ENCODE measurements at regions of chr10 and their contacts with region 1.

Region 1: GRCh38 chr10:109883859-109884771 is 39.2 kb downstream of the XPNPEP1 start:
- DNase-seq: peak; percentile 93
- H3K4me3 ChIP-seq: no peak overlapping the region
- H3K27ac ChIP-seq: peak overlapping the region; percentile 68
- H3K4me1 ChIP-seq: peaks cover 10% of the 10 kb centered on the region
- H3K27me3 ChIP-seq: no peaks in the 10 kb centered on the region
- CTCF ChIP-seq: peak; percentile 92 to 97
- POLR2A ChIP-seq: no peak

Region 2: DNA sequence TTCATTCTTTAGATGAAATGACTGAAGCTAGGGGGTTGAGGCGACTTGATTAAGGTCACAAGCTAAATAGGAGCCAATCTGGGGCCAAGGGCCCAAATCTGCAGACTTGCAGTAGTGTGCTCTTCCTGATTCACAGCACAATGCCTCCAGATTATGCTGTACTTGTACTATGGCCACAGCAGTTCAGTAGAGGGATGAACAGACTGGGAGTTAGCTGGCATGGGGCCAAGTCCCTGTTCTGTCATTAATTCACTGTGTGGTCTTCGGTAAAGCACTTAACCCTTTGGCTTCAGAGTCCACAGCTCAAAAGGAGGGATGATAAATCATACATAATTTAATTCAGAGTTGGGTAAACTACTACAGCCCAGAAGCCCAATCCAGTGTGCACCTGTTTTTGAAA is 157.6 kb before region 1 on chr10:
- CTCF ChIA-PET with region 1: no interaction called
- POLR2A ChIA-PET with region 1: no interaction called
- dilution Hi-C with region 1: no loop called
- intact Hi-C with region 1: no loop called
- DNase-seq: no peak
- H3K4me3 ChIP-seq: no peak overlapping the region
- H3K27ac ChIP-seq: no peak overlapping the region
- H3K4me1 ChIP-seq: no peaks in the 10 kb centered on the region
- H3K27me3 ChIP-seq: no peaks in the 10 kb centered on the region
- CTCF ChIP-seq: no peak
- POLR2A ChIP-seq: no peak

Region 3: GRCh38 chr10:109922976-109923921 is 39.1 kb after region 1 on chr10 and contains the start of gene XPNPEP1:
- CTCF ChIA-PET with region 1: interaction called, 10 read pairs
- POLR2A ChIA-PET with region 1: no interaction called
- dilution Hi-C with region 1: no loop called
- intact Hi-C with region 1: loop called (anchors 1 kb)
- DNase-seq: peak; percentile 86
- H3K4me3 ChIP-seq: peak within 1 kb of the TSS; percentile 58 to 91 (median 80)
- H3K27ac ChIP-seq: peak within 1 kb of the TSS; percentile 92
- H3K4me1 ChIP-seq: peaks cover 12% of the 10 kb centered on the region
- H3K27me3 ChIP-seq: no peaks in the 10 kb centered on the region
- CTCF ChIP-seq: peak in 1 of 2 donors; percentile 4
- POLR2A ChIP-seq: peak; percentile 91
- total RNA-seq, gene XPNPEP1: 81.1 and 87.3 TPM in 2 replicates

Region 4: GRCh38 chr10:109987452-109988211 is 103.5 kb after region 1 on chr10:
- CTCF ChIA-PET with region 1: interaction called, 16 read pairs
- POLR2A ChIA-PET with region 1: no interaction called
- dilution Hi-C with region 1: no loop called
- intact Hi-C with region 1: no loop called
- DNase-seq: peak; percentile 37
- H3K4me3 ChIP-seq: no peak overlapping the region
- H3K27ac ChIP-seq: no peak overlapping the region
- H3K4me1 ChIP-seq: peaks cover 1% of the 10 kb centered on the region
- H3K27me3 ChIP-seq: no peaks in the 10 kb centered on the region
- CTCF ChIP-seq: no peak
- POLR2A ChIP-seq: no peak

Region 5: DNA sequence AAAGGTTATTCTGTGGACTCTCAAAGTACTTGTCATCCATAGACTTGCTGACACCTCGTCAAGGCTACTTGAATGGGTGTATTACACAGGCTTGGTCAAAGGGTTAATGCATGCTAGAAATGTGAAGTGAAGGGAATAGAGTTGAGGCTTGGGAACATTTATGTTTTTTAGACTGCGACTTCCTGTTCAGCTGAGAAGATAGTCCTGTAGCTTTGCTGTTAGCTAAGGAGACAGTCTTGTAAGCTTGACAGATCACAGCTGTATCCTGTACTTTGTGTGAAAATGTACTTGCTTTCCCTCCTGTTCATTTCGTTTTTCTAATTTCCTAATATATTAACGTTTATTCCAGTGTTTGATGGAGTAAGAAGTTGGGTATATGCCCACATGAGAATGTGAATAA is 175.8 kb after region 1 on chr10:
- CTCF ChIA-PET with region 1: interaction called, 17 read pairs
- POLR2A ChIA-PET with region 1: no interaction called
- dilution Hi-C with region 1: no loop called
- intact Hi-C with region 1: no loop called
- DNase-seq: peak; percentile 47
- H3K4me3 ChIP-seq: no peak overlapping the region
- H3K27ac ChIP-seq: no peak overlapping the region
- H3K4me1 ChIP-seq: peaks cover 14% of the 10 kb centered on the region
- H3K27me3 ChIP-seq: no peaks in the 10 kb centered on the region
- CTCF ChIP-seq: no peak
- POLR2A ChIP-seq: no peak

Region 6: GRCh38 chr10:110129490-110129889 is 245.4 kb after region 1 on chr10:
- CTCF ChIA-PET with region 1: interaction called, 39 read pairs
- POLR2A ChIA-PET with region 1: no interaction called
- dilution Hi-C with region 1: no loop called
- intact Hi-C with region 1: no loop called
- DNase-seq: no peak
- H3K4me3 ChIP-seq: no peak overlapping the region
- H3K27ac ChIP-seq: no peak overlapping the region
- H3K4me1 ChIP-seq: no peaks in the 10 kb centered on the region
- H3K27me3 ChIP-seq: no peaks in the 10 kb centered on the region
- CTCF ChIP-seq: no peak
- POLR2A ChIP-seq: no peak

Region 7: GRCh38 chr10:110269374-110270318 is 385.5 kb after region 1 on chr10:
- CTCF ChIA-PET with region 1: interaction called, 15 read pairs
- POLR2A ChIA-PET with region 1: no interaction called
- dilution Hi-C with region 1: no loop called
- intact Hi-C with region 1: no loop called
- DNase-seq: no peak
- H3K4me3 ChIP-seq: no peak overlapping the region
- H3K27ac ChIP-seq: no peak overlapping the region
- H3K4me1 ChIP-seq: no peaks in the 10 kb centered on the region
- H3K27me3 ChIP-seq: no peaks in the 10 kb centered on the region
- CTCF ChIP-seq: no peak
- POLR2A ChIP-seq: no peak

Measured in endothelial cell of umbilical vein (primary cell).